ENCODE measurements at regions of chr11 and their contacts with region 1.

Region 1: DNA sequence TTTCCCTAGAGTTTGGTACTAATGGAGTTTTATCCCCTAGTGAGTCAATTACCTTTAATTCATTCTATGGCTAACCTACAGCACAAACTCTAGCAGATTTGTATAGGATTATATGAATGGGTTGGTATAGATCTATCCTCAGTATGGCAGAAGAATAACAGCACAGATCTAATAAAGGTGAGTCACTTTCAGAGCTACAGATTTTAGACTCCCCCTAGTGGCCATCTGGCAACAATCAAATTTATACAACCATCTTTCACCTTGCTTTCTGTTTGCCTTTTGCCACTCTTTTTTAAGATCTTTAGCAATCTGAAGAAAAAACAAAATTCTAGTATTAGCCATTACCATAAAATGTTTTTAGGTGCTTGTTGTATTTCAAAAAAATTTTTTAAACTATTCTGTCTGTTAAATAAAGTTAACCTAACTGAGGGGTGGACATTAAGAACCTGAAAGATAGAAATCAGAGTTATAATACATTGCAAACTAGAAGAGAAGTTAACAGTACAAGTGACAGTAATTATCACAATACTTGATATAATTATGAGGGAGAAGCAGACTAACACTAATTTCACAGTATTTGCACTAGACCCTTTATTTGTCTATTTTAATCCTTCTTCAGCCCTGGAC is 25.8 kb downstream of the DDIAS start:
- DNase-seq: peak in 1 of 2 donors; percentile 84
- ATAC-seq: peak; percentile 73 to 98 (median 86)
- H3K4me3 ChIP-seq: no peak overlapping the region
- H3K4me3 Mint-ChIP-seq: no peak overlapping the region
- H3K27ac ChIP-seq: no peak overlapping the region
- H3K27ac Mint-ChIP-seq: peak overlapping the region; percentile 37 to 42
- H3K4me1 ChIP-seq: no peaks in the 10 kb centered on the region
- H3K4me1 Mint-ChIP-seq: peaks cover 6 to 14% of the 10 kb centered on the region in 2 donors
- H3K27me3 ChIP-seq: no peaks in the 10 kb centered on the region
- H3K27me3 Mint-ChIP-seq: no peaks in the 10 kb centered on the region
- CTCF ChIP-seq: peak; percentile 93

Region 2: GRCh38 chr11:82747471-82747870 is 179.9 kb before region 1 on chr11:
- intact Hi-C with region 1: no loop called
- DNase-seq: no peak
- ATAC-seq: no peak
- H3K4me3 ChIP-seq: no peak overlapping the region
- H3K4me3 Mint-ChIP-seq: no peak overlapping the region
- H3K27ac ChIP-seq: no peak overlapping the region
- H3K27ac Mint-ChIP-seq: no peak overlapping the region
- H3K4me1 ChIP-seq: no peaks in the 10 kb centered on the region
- H3K4me1 Mint-ChIP-seq: peaks cover 11 to 17% of the 10 kb centered on the region in 2 donors
- H3K27me3 ChIP-seq: peaks cover 3% of the 10 kb centered on the region
- H3K27me3 Mint-ChIP-seq: peaks cover 4 to 39% of the 10 kb centered on the region in 2 donors
- CTCF ChIP-seq: no peak

Region 3: DNA sequence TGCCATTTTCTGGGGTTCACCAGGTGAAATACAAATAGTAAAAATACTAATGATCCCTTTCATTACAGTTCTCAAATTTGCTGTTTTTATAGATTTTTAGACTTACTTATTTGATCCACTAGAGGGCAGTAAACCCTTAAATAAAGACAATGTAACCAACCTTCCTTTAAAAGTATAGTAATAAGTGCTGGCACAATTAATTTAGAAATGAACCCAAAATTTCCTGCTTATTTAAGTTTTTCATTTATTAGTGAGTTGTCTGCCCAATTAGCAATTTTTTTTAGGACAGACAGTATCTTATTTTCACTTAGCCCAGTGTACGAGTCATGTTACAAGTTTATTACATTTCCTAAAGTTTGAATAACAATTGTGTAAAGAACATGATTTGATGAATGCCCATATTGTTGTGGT is 21.1 kb before region 1 on chr11:
- intact Hi-C with region 1: loop called (anchors 1 kb)
- DNase-seq: peak in 1 of 2 donors; percentile 57
- ATAC-seq: no peak
- H3K4me3 ChIP-seq: no peak overlapping the region
- H3K4me3 Mint-ChIP-seq: no peak overlapping the region
- H3K27ac ChIP-seq: no peak overlapping the region
- H3K27ac Mint-ChIP-seq: no peak overlapping the region
- H3K4me1 ChIP-seq: peaks cover 8% of the 10 kb centered on the region
- H3K4me1 Mint-ChIP-seq: peaks cover 15 to 16% of the 10 kb centered on the region in 2 donors
- H3K27me3 ChIP-seq: no peaks in the 10 kb centered on the region
- H3K27me3 Mint-ChIP-seq: no peaks in the 10 kb centered on the region
- CTCF ChIP-seq: peak; percentile 82

Region 4: DNA sequence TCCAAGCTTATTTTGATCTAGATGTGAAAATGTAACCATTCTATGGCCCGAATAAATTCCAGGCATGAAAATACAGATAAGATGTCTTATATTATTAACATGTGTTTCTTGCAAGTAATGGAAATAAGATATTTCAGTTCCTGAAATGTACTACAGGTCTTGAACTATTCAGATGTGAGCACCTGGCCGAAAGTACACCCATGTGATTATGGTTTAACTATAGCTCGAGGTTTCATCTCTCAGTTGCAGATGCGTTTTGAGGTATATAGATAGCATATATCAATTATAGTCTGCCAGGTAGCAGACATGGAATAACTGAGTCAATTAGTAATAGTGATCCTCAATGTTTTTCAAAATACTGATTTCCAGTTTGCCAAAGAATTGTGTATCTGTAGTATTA is 42.4 kb after region 1 on chr11:
- intact Hi-C with region 1: loop called (anchors 5 kb)
- DNase-seq: no peak
- ATAC-seq: no peak
- H3K4me3 ChIP-seq: no peak overlapping the region
- H3K4me3 Mint-ChIP-seq: peak overlapping the region; percentile 31
- H3K27ac ChIP-seq: no peak overlapping the region
- H3K27ac Mint-ChIP-seq: no peak overlapping the region
- H3K4me1 ChIP-seq: peaks cover 13% of the 10 kb centered on the region
- H3K4me1 Mint-ChIP-seq: peaks cover 14 to 20% of the 10 kb centered on the region in 2 donors
- H3K27me3 ChIP-seq: no peaks in the 10 kb centered on the region
- H3K27me3 Mint-ChIP-seq: no peaks in the 10 kb centered on the region
- CTCF ChIP-seq: no peak